ENCODE measurements at regions of chr3 and their contacts with region 1.

Region 1: GRCh38 chr3:99833617-99834205 is 16.0 kb downstream of the CMSS1 start:
- DNase-seq: no peak
- H3K4me3 Mint-ChIP-seq: no peak overlapping the region
- H3K27ac Mint-ChIP-seq: no peak overlapping the region
- H3K4me1 Mint-ChIP-seq: peaks cover 7% of the 10 kb centered on the region
- H3K27me3 Mint-ChIP-seq: no peaks in the 10 kb centered on the region

Region 2: GRCh38 chr3:99817437-99818240 is 16.1 kb before region 1 on chr3 and contains the start of gene CMSS1:
- CTCF ChIA-PET with region 1: interaction called, 18 read pairs
- POLR2A ChIA-PET with region 1: no interaction called
- DNase-seq: peak; percentile 94
- H3K4me3 Mint-ChIP-seq: peak within 1 kb of the TSS; percentile 84
- H3K27ac Mint-ChIP-seq: peak within 1 kb of the TSS; percentile 76
- H3K4me1 Mint-ChIP-seq: peaks cover 38% of the 10 kb centered on the region
- H3K27me3 Mint-ChIP-seq: no peaks in the 10 kb centered on the region
- total RNA-seq, gene CMSS1: 28.0 to 31.0 TPM

Region 3: DNA sequence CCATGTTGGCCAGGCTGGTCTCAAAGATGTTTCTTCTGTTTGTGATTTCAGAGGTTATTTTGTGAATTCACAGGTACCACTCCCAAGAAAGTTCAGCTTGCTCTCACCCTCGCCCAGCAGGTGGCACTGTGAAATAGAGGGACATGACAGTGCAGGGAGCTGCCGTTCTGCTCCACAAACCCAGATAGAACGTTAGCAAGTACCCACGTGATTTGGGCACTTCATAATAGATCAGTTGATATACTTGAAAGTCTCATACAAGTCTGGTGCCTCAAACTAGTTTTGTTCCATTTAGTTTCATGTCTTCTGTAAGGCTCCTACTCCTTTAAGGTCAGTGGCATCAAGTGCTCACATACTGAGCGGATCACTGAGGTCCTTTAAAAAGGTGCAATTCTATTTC is 235.1 kb after region 1 on chr3:
- CTCF ChIA-PET with region 1: interaction called, 11 read pairs
- POLR2A ChIA-PET with region 1: no interaction called
- DNase-seq: peak; percentile 87
- H3K4me3 Mint-ChIP-seq: no peak overlapping the region
- H3K27ac Mint-ChIP-seq: no peak overlapping the region
- H3K4me1 Mint-ChIP-seq: peaks cover 46% of the 10 kb centered on the region
- H3K27me3 Mint-ChIP-seq: no peaks in the 10 kb centered on the region

Region 4: GRCh38 chr3:100089812-100090668 is 256.3 kb after region 1 on chr3:
- CTCF ChIA-PET with region 1: interaction called, 26 read pairs
- POLR2A ChIA-PET with region 1: no interaction called
- DNase-seq: peak; percentile 51
- H3K4me3 Mint-ChIP-seq: no peak overlapping the region
- H3K27ac Mint-ChIP-seq: no peak overlapping the region
- H3K4me1 Mint-ChIP-seq: peaks cover 40% of the 10 kb centered on the region
- H3K27me3 Mint-ChIP-seq: peaks cover 4% of the 10 kb centered on the region

Region 5: GRCh38 chr3:100254168-100254777 is 420.6 kb after region 1 on chr3:
- CTCF ChIA-PET with region 1: interaction called, 81 read pairs
- POLR2A ChIA-PET with region 1: no interaction called
- DNase-seq: peak; percentile 56
- H3K4me3 Mint-ChIP-seq: no peak overlapping the region
- H3K27ac Mint-ChIP-seq: no peak overlapping the region
- H3K4me1 Mint-ChIP-seq: no peaks in the 10 kb centered on the region
- H3K27me3 Mint-ChIP-seq: no peaks in the 10 kb centered on the region

Region 6: DNA sequence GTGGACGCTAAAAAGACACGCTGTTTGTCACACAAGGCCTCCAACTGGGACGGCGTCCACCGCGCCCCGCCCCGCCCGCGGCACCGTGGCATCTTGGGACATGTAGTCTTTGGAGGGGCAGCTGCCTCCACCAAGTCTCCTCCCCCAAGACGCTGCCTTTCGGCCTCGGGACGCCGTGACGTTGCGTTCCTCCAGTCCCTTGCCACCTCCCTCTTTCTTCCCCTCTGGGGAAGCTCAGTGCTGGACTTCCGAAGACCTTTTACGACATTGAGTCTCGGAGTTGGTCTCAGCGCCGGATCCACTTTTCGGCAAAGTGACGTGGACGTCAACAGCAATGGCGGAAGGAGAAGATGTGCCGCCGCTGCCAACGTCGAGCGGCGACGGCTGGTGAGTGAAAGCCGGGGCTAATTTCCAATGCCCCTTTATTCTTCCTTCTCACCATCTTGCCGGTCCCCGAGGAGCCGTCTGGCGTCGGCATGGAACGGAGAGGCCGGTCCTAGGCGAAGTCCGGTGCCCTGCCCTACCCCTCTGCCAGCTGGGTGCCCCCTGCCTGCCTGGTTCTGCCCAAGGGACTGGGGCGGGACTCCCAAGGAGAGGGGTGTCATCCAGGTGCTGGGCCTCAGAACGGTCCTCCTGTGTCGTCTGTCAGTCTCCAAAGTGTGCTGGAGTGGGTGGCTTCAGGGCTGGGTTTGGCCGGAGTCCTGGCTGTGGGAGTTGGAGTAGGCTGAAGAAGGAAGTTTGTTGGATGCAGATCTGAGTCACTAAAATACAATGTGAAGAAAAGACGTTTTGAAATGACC is 427.2 kb after region 1 on chr3 and contains the start of gene TBC1D23:
- CTCF ChIA-PET with region 1: interaction called, 81 read pairs
- POLR2A ChIA-PET with region 1: interaction called, 3 read pairs
- DNase-seq: peak; percentile 98
- H3K4me3 Mint-ChIP-seq: peak within 1 kb of the TSS; percentile 96
- H3K27ac Mint-ChIP-seq: peak within 1 kb of the TSS; percentile 84
- H3K4me1 Mint-ChIP-seq: peaks cover 42% of the 10 kb centered on the region
- H3K27me3 Mint-ChIP-seq: no peaks in the 10 kb centered on the region
- total RNA-seq, gene TBC1D23: 26.5 to 29.3 TPM

Region 7: DNA sequence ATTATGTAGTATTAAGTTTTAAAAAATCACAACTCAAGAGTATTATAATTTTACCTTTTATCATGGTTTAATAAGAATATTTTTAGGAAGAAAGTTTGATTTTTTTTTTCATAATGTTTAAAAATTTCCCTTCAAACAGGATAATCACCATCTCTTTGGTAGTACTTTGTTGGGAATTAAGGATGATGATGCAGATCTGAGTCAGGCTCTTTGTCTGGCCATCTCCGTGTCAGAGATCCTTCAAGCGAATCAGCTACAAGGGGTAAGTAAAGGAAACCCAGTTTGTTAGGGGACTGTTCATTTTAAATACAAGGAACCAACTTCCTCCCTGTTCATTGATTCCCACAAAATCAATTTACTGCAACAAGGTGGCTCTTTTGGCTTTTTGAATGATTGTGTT is 464.1 kb after region 1 on chr3:
- CTCF ChIA-PET with region 1: no interaction called
- POLR2A ChIA-PET with region 1: no interaction called
- DNase-seq: no peak
- H3K4me3 Mint-ChIP-seq: no peak overlapping the region
- H3K27ac Mint-ChIP-seq: no peak overlapping the region
- H3K4me1 Mint-ChIP-seq: no peaks in the 10 kb centered on the region
- H3K27me3 Mint-ChIP-seq: no peaks in the 10 kb centered on the region

Region 8: GRCh38 chr3:100316641-100317069 is 482.9 kb after region 1 on chr3:
- CTCF ChIA-PET with region 1: interaction called, 16 read pairs
- POLR2A ChIA-PET with region 1: no interaction called
- DNase-seq: peak; percentile 43
- H3K4me3 Mint-ChIP-seq: no peak overlapping the region
- H3K27ac Mint-ChIP-seq: no peak overlapping the region
- H3K4me1 Mint-ChIP-seq: peaks cover 15% of the 10 kb centered on the region
- H3K27me3 Mint-ChIP-seq: no peaks in the 10 kb centered on the region